ENCODE measurements at regions of chr5 and their contacts with region 1.

Region 1: DNA sequence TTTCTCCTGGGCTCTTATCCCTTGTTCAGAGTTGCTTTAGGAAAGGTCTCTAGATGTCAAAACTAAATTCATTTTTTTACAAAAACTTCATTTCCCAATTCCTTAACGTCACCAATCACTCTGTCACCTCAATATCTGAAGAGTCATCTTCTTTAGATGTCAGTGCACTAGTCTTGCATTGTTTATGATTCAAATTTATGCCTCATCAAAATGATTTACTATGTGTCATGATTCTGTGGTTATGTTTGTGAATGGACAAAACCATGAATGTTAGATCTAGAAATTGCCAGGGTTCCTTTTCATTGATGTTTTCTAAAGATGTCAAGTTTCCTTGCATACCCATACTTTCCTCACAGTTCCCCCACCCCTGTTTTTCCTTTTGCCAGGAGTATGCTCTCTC is 21.5 kb downstream of the CWC27 start:
- DNase-seq: no peak
- H3K4me3 ChIP-seq: no peak overlapping the region
- H3K27ac ChIP-seq: no peak overlapping the region
- H3K4me1 ChIP-seq: peaks cover 0 to 4% (median 0%) of the 10 kb centered on the region in 6 donors
- H3K27me3 ChIP-seq: no peaks in the 10 kb centered on the region
- CTCF ChIP-seq: no peak
- POLR2A ChIP-seq: no peak

Region 2: GRCh38 chr5:64644831-64645230 is 145.4 kb before region 1 on chr5:
- intact Hi-C with region 1: loop called (anchors 5 kb)
- DNase-seq: no peak
- H3K4me3 ChIP-seq: no peak overlapping the region
- H3K27ac ChIP-seq: no peak overlapping the region
- H3K4me1 ChIP-seq: no peaks in the 10 kb centered on the region
- H3K27me3 ChIP-seq: no peaks in the 10 kb centered on the region
- CTCF ChIP-seq: no peak
- POLR2A ChIP-seq: no peak

Region 3: GRCh38 chr5:64680289-64680688 is 109.9 kb before region 1 on chr5:
- intact Hi-C with region 1: no loop called
- DNase-seq: no peak
- H3K4me3 ChIP-seq: no peak overlapping the region
- H3K27ac ChIP-seq: no peak overlapping the region
- H3K4me1 ChIP-seq: no peaks in the 10 kb centered on the region
- H3K27me3 ChIP-seq: peaks cover 0 to 4% (median 0%) of the 10 kb centered on the region in 7 donors
- CTCF ChIP-seq: no peak
- POLR2A ChIP-seq: no peak